CD8-positive, alpha-beta memory T cell (primary cell): ENCODE measurements at regions of chr14 and their contacts with region 1.

Region 1: GRCh38 chr14:24160850-24161804 is at the start of gene IRF9:
- DNase-seq: peak; percentile 93 to 97 (median 96)
- H3K4me3 ChIP-seq: peak within 1 kb of the TSS; percentile 99
- H3K4me3 Mint-ChIP-seq: peak within 1 kb of the TSS; percentile 89 to 100 (median 98)
- H3K27ac ChIP-seq: peak within 1 kb of the TSS; percentile 96
- H3K27ac Mint-ChIP-seq: peak within 1 kb of the TSS; percentile 84 to 100 (median 99)
- H3K4me1 ChIP-seq: peaks cover 41% of the 10 kb centered on the region
- H3K4me1 Mint-ChIP-seq: peaks cover 40 to 56% (median 49%) of the 10 kb centered on the region in 3 donors
- H3K27me3 ChIP-seq: no peaks in the 10 kb centered on the region
- H3K27me3 Mint-ChIP-seq: peaks cover 0 to 3% of the 10 kb centered on the region in 2 donors
- total RNA-seq, gene IRF9: 62.0 to 68.6 TPM

Region 2: GRCh38 chr14:24108336-24108874 is 52.7 kb before region 1 on chr14:
- CTCF ChIA-PET with region 1: interaction called, 35 read pairs
- POLR2A ChIA-PET with region 1: interaction called, 23 read pairs
- DNase-seq: no peak
- H3K4me3 ChIP-seq: no peak overlapping the region
- H3K4me3 Mint-ChIP-seq: peak overlapping the region in 2 of 7 donors; percentile 4 to 56
- H3K27ac ChIP-seq: no peak overlapping the region
- H3K27ac Mint-ChIP-seq: peak overlapping the region; percentile 79 to 97 (median 94)
- H3K4me1 ChIP-seq: peaks cover 15% of the 10 kb centered on the region
- H3K4me1 Mint-ChIP-seq: peaks cover 9 to 14% (median 10%) of the 10 kb centered on the region in 3 donors
- H3K27me3 ChIP-seq: no peaks in the 10 kb centered on the region
- H3K27me3 Mint-ChIP-seq: no peaks in the 10 kb centered on the region

Region 3: DNA sequence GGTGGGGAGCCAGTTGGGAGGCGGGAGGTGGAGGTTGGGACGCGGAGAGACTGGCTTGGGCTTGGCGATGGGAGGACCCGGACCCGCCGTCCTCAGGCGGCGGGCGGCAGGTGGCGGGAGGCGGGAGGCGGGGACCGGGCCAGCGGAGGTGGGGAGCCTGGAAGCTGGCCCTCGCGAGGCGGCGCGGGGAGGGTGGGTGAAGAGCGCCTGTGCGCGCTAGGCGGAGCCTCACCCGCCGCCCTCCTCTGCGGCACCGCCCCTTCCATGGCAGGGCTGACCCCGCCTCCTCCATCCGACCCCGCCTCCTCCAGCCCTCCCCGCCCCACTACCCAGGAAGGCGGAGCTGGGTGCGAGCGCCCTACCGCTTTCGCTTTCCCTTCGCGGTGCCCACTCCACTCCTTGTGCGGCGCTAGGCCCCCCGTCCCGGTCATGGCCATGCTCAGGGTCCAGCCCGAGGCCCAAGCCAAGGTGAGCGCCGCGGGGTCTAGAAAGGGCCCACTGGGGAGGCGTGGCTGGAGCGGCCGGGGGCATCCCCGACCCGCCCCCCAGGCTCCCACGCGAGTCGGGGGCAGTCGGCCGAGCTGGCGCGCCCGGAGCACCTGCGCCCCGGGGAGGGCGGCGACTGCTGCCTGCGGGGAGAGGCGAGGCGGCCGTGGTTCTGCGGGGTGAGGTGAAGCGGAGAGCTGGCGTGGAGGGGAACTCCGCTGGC is 25.1 kb before region 1 on chr14 and contains the start of gene PSME1:
- CTCF ChIA-PET with region 1: interaction called, 40 read pairs
- POLR2A ChIA-PET with region 1: interaction called, 11 read pairs
- DNase-seq: peak; percentile 91 to 95 (median 93)
- H3K4me3 ChIP-seq: peak within 1 kb of the TSS; percentile 73
- H3K4me3 Mint-ChIP-seq: peak within 1 kb of the TSS; percentile 89 to 96 (median 92)
- H3K27ac ChIP-seq: peak within 1 kb of the TSS; percentile 72
- H3K27ac Mint-ChIP-seq: peak within 1 kb of the TSS; percentile 87 to 97 (median 95)
- H3K4me1 ChIP-seq: peaks cover 47% of the 10 kb centered on the region
- H3K4me1 Mint-ChIP-seq: peaks cover 56 to 67% (median 60%) of the 10 kb centered on the region in 3 donors
- H3K27me3 ChIP-seq: no peaks in the 10 kb centered on the region
- H3K27me3 Mint-ChIP-seq: no peaks in the 10 kb centered on the region
- total RNA-seq, gene PSME1: 343 to 347 TPM

Region 4: DNA sequence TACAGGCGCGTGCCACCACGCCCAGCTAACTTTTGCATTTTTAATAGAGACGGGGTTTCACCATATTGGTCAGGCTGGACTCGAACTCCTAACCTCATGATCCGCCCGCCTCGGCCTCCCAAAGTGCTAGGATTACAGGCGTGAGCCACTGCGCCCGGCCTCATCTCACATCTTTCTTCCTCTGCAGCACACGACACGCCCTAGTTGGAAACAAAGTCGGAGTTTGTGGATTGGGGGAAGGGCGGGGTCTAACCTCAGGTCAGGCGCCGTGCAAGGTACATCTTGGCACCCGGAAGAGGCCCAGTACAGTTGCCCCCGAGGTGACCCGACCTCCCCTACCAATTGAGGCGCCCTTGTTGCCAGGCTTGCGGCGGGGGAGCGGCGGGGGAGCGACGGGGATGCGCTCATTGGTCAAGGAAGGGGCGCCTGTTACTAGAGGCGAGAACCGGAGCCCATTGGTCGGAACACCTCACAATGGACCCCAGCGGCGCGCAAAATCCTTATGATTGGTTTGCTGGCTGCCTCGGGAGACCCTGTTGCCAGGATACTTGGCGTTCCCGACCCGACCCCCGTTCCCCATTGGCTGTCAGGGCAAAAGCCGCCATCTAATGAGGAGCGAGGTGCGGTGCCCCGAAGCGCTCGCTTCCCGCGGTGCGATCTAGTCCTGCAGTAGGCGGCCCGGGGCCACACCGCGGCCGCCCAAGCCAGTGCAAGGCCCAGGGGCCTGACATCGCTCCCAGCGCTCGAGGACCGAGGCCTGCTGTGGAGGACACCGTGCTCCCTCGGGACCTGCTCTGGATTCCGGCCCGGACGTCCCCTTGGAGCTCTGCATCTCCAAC is 10.5 kb after region 1 on chr14 and contains the start of gene REC8:
- CTCF ChIA-PET with region 1: interaction called, 36 read pairs
- POLR2A ChIA-PET with region 1: interaction called, 8 read pairs
- DNase-seq: peak; percentile 67 to 89 (median 80)
- H3K4me3 ChIP-seq: peak within 1 kb of the TSS; percentile 48
- H3K4me3 Mint-ChIP-seq: peak within 1 kb of the TSS; percentile 81 to 91 (median 90)
- H3K27ac ChIP-seq: no peak within 1 kb of the TSS
- H3K27ac Mint-ChIP-seq: peak within 1 kb of the TSS; percentile 88 to 96 (median 93)
- H3K4me1 ChIP-seq: no peaks in the 10 kb centered on the region
- H3K4me1 Mint-ChIP-seq: peaks cover 33 to 48% (median 47%) of the 10 kb centered on the region in 3 donors
- H3K27me3 ChIP-seq: no peaks in the 10 kb centered on the region
- H3K27me3 Mint-ChIP-seq: peaks cover 0 to 2% of the 10 kb centered on the region in 2 donors
- total RNA-seq, gene REC8: 24.5 to 26.7 TPM

Region 5: GRCh38 chr14:24195191-24196070 is 34.3 kb after region 1 on chr14 and contains the start of gene TM9SF1:
- CTCF ChIA-PET with region 1: interaction called, 22 read pairs
- POLR2A ChIA-PET with region 1: interaction called, 20 read pairs
- DNase-seq: peak; percentile 89 to 98 (median 91)
- H3K4me3 ChIP-seq: peak within 1 kb of the TSS; percentile 91
- H3K4me3 Mint-ChIP-seq: peak within 1 kb of the TSS; percentile 83 to 96 (median 94)
- H3K27ac ChIP-seq: peak within 1 kb of the TSS; percentile 100
- H3K27ac Mint-ChIP-seq: peak within 1 kb of the TSS; percentile 96 to 100 (median 99)
- H3K4me1 ChIP-seq: peaks cover 32% of the 10 kb centered on the region
- H3K4me1 Mint-ChIP-seq: peaks cover 37 to 76% (median 56%) of the 10 kb centered on the region in 3 donors
- H3K27me3 ChIP-seq: no peaks in the 10 kb centered on the region
- H3K27me3 Mint-ChIP-seq: peaks cover 0 to 1% of the 10 kb centered on the region in 2 donors
- total RNA-seq, gene TM9SF1: 31.3 to 34.0 TPM

Region 6: DNA sequence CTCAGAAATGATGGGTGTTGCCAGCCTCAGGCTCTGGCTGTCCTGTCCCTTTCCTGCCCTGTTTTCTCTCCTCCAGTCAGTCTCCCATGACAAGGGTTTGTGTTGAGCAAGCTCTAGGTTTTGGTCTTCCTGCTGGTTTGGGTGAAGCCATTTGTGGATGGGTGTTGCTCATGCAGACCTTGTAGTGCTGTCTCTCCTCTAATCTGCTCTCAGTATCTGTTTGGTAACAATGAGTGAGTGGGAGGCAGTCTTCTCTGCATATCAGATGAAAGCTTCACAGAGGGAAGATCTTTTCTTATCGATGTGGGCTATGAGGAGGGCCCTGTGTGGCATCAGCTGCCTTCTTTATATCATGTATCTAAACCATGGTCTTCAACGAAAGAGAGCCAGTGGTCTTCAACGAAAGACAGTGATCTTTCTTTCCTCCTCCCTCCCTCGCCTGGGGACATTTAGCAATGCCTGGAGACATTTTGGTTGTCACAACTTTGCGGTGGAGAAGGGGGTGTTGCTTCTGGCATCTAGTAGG is 343.4 kb after region 1 on chr14:
- CTCF ChIA-PET with region 1: no interaction called
- POLR2A ChIA-PET with region 1: no interaction called
- DNase-seq: no peak
- H3K4me3 ChIP-seq: no peak overlapping the region
- H3K4me3 Mint-ChIP-seq: no peak overlapping the region
- H3K27ac ChIP-seq: no peak overlapping the region
- H3K27ac Mint-ChIP-seq: no peak overlapping the region
- H3K4me1 ChIP-seq: no peaks in the 10 kb centered on the region
- H3K4me1 Mint-ChIP-seq: no peaks in the 10 kb centered on the region
- H3K27me3 ChIP-seq: no peaks in the 10 kb centered on the region
- H3K27me3 Mint-ChIP-seq: peaks cover 19 to 36% of the 10 kb centered on the region in 2 donors